Transverse colon (tissue), 4 donors: ENCODE measurements at regions of chr21 and their contacts with region 1.

Region 1: GRCh38 chr21:42117229-42117966 is 46.3 kb downstream of the UMODL1 start:
- DNase-seq: peak; percentile 87
- H3K4me3 ChIP-seq: no peak overlapping the region
- H3K27ac ChIP-seq: no peak overlapping the region
- H3K4me1 ChIP-seq: peaks cover 0 to 9% (median 8%) of the 10 kb centered on the region in 4 donors
- H3K27me3 ChIP-seq: peaks cover 37% of the 10 kb centered on the region
- CTCF ChIP-seq: peak; percentile 92 to 98 (median 94)
- EP300 ChIP-seq: no peak
- POLR2A ChIP-seq: no peak

Region 2: GRCh38 chr21:41816220-41817165 is 300.9 kb before region 1 on chr21:
- in situ Hi-C with region 1: loop called in 3 of 4 experiments (anchors 10 to 25 kb)
- intact Hi-C with region 1: loop called (anchors 5 kb)
- DNase-seq: peak; percentile 75
- H3K4me3 ChIP-seq: no peak overlapping the region
- H3K27ac ChIP-seq: no peak overlapping the region
- H3K4me1 ChIP-seq: peaks cover 0 to 4% (median 2%) of the 10 kb centered on the region in 4 donors
- H3K27me3 ChIP-seq: no peaks in the 10 kb centered on the region
- CTCF ChIP-seq: peak; percentile 63 to 80 (median 71)
- EP300 ChIP-seq: no peak
- POLR2A ChIP-seq: no peak

Region 3: DNA sequence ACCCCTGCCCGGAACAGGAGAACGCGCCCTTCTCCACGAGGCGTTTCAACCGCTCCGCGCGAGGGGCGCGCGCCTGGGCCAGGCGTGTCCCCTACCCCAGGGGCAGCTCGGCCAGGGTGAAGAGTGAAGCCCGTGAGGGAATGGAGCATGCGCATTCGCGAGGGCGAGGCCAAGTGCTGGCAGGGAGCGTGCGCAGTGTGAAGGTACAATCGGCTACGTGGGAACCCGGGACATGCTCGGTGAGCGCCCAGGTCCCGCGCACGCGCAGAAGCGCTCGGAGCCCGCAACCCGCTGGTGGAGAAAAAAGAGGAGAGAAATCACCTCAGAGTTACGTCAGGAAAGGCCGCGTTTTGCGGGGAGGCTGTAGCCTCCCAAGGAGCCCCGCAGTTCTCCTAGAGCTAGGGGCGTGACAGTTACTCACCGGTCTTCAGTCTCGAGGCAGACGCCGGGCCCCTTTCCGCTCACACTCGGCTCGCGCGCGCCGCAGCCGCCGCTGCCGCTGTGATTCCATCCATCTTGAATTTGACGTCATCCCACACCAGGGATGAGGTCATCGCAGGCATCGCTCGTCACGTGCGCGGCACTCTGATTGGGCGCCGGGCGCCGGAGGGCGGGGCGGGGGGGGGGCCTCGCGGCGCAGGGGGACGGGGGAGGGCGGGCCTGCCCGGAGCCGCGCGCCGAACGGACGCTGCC is 107.4 kb before region 1 on chr21 and contains the start of gene ZBTB21:
- in situ Hi-C with region 1: loop called in 2 of 4 experiments (anchors 5 to 10 kb)
- intact Hi-C with region 1: no loop called
- DNase-seq: peak; percentile 99
- H3K4me3 ChIP-seq: peak within 1 kb of the TSS; percentile 69 to 99 (median 91)
- H3K27ac ChIP-seq: peak within 1 kb of the TSS; percentile 96 to 99 (median 99)
- H3K4me1 ChIP-seq: peaks cover 5 to 31% (median 19%) of the 10 kb centered on the region in 4 donors
- H3K27me3 ChIP-seq: no peaks in the 10 kb centered on the region
- CTCF ChIP-seq: no peak
- EP300 ChIP-seq: no peak
- POLR2A ChIP-seq: peak; percentile 95
- total RNA-seq, gene ZBTB21: 5.2 to 19.5 (median 9.7) TPM

Region 4: DNA sequence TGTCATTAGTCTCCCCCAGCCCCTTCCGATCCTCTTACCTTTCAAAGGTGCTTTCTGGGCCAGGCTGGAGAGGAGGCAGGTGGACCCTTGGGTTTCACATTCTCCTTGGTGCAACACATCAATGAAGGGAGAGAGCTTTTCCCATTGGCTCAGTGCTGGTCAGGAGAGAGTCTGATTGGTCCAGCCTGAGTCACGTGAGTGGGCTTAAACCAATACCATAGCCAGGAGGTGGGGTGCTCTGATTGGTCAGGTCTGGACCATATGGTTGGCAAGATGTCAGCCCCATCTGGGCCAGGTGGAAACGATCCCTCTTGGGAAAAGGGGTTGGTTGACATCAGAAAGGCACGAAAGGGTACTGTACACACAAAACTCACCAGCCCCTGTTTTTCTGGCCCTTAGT is 56.8 kb after region 1 on chr21:
- in situ Hi-C with region 1: no loop called
- intact Hi-C with region 1: no loop called
- DNase-seq: no peak
- H3K4me3 ChIP-seq: no peak overlapping the region
- H3K27ac ChIP-seq: no peak overlapping the region
- H3K4me1 ChIP-seq: peaks cover 4 to 26% (median 21%) of the 10 kb centered on the region in 4 donors
- H3K27me3 ChIP-seq: no peaks in the 10 kb centered on the region
- CTCF ChIP-seq: no peak
- EP300 ChIP-seq: no peak
- POLR2A ChIP-seq: no peak